ENCODE measurements at regions of chrX and their contacts with region 1.

Region 1: DNA sequence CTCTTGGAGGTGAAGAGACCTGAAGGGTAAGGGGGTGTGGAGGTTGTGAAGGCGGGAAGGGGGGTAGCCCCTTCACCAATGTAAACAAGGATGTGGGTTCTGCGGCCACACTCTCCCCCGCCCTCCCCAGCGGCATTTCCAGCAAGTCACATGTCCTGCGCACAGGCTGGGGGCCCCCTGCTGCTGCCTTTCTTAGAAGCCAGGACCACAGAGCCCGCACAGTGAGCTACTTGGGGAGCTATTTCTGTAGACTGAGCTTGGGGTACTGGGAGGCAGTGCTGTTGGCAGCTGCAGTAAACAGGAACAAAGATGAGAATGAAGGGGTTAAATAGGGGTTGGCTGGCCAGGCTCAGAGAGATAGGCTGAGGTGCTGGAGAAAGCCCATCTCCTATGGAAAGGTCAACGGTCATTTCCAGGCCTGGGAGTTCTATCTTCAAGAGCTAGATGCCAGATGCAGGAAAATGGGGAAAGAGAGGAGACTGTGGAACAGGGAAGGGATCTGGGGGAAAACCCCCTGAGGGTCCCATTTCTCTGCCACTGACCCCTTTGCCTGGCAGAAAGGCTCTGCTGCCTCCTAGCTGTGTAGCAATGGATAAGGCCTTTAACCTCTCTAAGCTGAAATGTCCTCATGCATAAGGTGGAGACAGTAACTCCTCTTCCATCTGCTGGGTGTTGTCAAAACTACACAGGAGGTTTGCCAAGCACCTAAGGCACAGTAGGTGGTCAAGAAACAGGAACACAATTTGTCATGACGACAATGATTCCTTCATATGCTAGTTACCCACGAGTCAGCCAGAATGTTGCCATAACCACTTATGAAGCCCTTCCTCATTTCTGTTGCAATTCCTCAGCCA is 18.5 kb upstream of the PIM2 start:
- DNase-seq: peak; percentile 76 to 97 (median 93)
- ATAC-seq: peak; percentile 70 to 82 (median 78)
- H3K4me3 ChIP-seq: peak overlapping the region; percentile 45 to 55
- H3K4me3 Mint-ChIP-seq: peak overlapping the region; percentile 70 to 84 (median 76)
- H3K27ac ChIP-seq: peak overlapping the region; percentile 98
- H3K27ac Mint-ChIP-seq: peak overlapping the region; percentile 92 to 99
- H3K4me1 ChIP-seq: peaks cover 31 to 84% of the 10 kb centered on the region in 2 experiments
- H3K4me1 Mint-ChIP-seq: peaks cover 87% of the 10 kb centered on the region in 3 donors
- H3K27me3 ChIP-seq: no peaks in the 10 kb centered on the region
- H3K27me3 Mint-ChIP-seq: no peaks in the 10 kb centered on the region

Region 2: GRCh38 chrX:48891402-48892288 is 45.6 kb before region 1 on chrX:
- CTCF ChIA-PET with region 1: interaction called in 1 of 2 experiments, 10 read pairs
- POLR2A ChIA-PET with region 1: no interaction called
- DNase-seq: peak; percentile 54 to 83 (median 69)
- ATAC-seq: peak; percentile 89 to 91 (median 90)
- H3K4me3 ChIP-seq: peak overlapping the region; percentile 40 to 62
- H3K4me3 Mint-ChIP-seq: peak overlapping the region; percentile 80 to 90 (median 81)
- H3K27ac ChIP-seq: no peak overlapping the region
- H3K27ac Mint-ChIP-seq: peak overlapping the region; percentile 46 to 78
- H3K4me1 ChIP-seq: peaks cover 2 to 28% of the 10 kb centered on the region in 2 experiments
- H3K4me1 Mint-ChIP-seq: peaks cover 21 to 26% (median 26%) of the 10 kb centered on the region in 3 donors
- H3K27me3 ChIP-seq: no peaks in the 10 kb centered on the region
- H3K27me3 Mint-ChIP-seq: peaks cover 0 to 9% of the 10 kb centered on the region in 2 donors

Region 3: GRCh38 chrX:48897621-48898306 is 39.5 kb before region 1 on chrX and contains the starts of genes PQBP1 and TIMM17B:
- CTCF ChIA-PET with region 1: interaction called in 1 of 2 experiments, 6 read pairs
- POLR2A ChIA-PET with region 1: interaction called in 1 of 2 experiments, 10 read pairs
- DNase-seq: peak; percentile 72 to 93 (median 86)
- ATAC-seq: peak; percentile 85 to 92 (median 90)
- H3K4me3 ChIP-seq: peak within 1 kb of the TSS; percentile 66 to 94
- H3K4me3 Mint-ChIP-seq: peak within 1 kb of the TSS; percentile 75 to 89 (median 85)
- H3K27ac ChIP-seq: peak within 1 kb of the TSS; percentile 97
- H3K27ac Mint-ChIP-seq: peak within 1 kb of the TSS; percentile 94 to 95
- H3K4me1 ChIP-seq: peaks cover 2 to 32% of the 10 kb centered on the region in 2 experiments
- H3K4me1 Mint-ChIP-seq: peaks cover 16 to 34% (median 19%) of the 10 kb centered on the region in 3 donors
- H3K27me3 ChIP-seq: no peaks in the 10 kb centered on the region
- H3K27me3 Mint-ChIP-seq: peaks cover 0 to 5% of the 10 kb centered on the region in 2 donors
- total RNA-seq, gene PQBP1: 62.5 to 79.5 (median 73.9) TPM
- total RNA-seq, gene TIMM17B: 40.5 to 52.1 (median 49.3) TPM

Region 4: DNA sequence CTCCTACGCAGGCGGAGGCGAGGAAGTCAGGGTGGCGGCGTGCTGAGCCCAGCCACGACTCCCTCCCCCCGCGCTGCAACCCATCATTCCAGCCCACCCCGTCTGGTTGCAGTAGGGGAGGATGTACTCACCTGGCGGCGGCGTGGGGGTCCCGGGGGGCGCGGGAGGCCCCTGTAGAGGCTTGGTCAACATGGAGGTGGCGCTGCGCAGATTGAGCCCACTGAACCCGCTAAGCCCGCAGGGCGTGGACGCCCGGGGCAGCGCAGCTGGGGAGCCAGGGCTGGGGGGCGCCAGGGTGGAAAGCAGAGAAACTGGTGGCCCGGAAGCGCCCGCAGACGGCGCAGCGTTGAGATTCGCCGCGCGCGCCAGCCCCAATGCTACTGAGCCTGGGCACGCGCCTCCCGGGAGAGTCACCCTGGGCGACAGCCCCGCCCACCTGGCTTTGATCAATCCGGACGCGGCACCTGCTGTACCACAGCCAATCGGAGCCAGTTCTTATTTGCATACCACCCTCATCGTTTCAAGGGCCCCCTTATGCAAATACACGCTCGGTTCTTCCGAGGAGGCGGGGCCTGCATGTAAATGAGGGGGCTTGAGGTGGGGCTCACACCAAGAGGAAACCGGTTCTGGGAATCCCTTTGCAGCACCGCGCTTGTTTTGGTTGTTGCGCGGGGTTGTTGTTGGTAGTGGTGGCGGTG is 18.5 kb before region 1 on chrX and contains the start of gene PIM2:
- CTCF ChIA-PET with region 1: interaction called, 5 to 7 read pairs
- POLR2A ChIA-PET with region 1: interaction called, 5 to 13 read pairs
- DNase-seq: peak; percentile 73 to 96 (median 92)
- ATAC-seq: peak; percentile 74 to 77 (median 76)
- H3K4me3 ChIP-seq: peak within 1 kb of the TSS; percentile 75 to 98
- H3K4me3 Mint-ChIP-seq: peak within 1 kb of the TSS; percentile 86 to 97 (median 96)
- H3K27ac ChIP-seq: peak within 1 kb of the TSS; percentile 92
- H3K27ac Mint-ChIP-seq: peak within 1 kb of the TSS; percentile 74 to 98
- H3K4me1 ChIP-seq: peaks cover 20 to 68% of the 10 kb centered on the region in 2 experiments
- H3K4me1 Mint-ChIP-seq: peaks cover 62 to 73% (median 63%) of the 10 kb centered on the region in 3 donors
- H3K27me3 ChIP-seq: no peaks in the 10 kb centered on the region
- H3K27me3 Mint-ChIP-seq: no peaks in the 10 kb centered on the region
- total RNA-seq, gene PIM2: 152 to 325 (median 160) TPM

Region 5: DNA sequence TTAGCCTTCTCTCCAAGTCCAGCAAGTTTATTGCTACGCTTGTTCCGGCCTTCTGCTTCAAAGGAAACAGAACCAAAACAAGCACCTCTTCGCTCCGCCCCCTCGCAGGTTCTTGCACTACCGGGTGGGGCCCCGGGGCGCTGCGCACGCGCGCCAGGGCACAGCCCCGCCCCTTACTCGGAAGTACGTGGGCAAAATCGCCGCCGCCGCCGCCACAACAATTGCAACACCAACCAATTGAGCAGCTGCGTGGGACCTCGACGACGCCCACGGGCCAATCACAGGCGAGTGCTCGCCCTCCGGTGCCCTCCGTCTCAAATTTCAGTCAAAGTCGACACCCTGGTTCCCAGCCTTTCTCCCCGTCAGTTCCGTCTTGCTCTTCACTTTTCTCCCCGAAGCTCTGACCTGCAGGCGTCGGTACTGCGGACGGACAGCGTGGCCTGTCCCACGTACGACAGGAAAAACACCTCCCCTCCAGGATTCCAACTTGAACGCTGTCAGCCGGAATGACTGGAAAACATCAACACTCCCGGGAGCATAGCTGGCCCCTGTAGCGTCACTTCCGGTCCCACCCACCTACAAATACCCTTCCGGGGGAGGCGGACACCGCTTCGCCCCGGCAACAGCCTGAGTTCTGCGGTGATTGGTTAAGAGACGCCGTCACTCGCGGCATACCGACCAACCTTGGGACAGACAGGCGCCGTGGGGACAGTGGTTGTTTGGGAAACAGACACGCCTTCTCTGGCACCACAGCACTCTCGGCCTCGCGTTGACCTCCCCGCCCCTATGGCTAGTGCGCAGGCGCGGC is 20.8 kb after region 1 on chrX:
- CTCF ChIA-PET with region 1: interaction called, 3 to 4 read pairs
- POLR2A ChIA-PET with region 1: interaction called, 5 to 23 read pairs
- DNase-seq: peak; percentile 77 to 97 (median 93)
- ATAC-seq: peak; percentile 81 to 86 (median 82)
- H3K4me3 ChIP-seq: peak overlapping the region; percentile 65 to 74
- H3K4me3 Mint-ChIP-seq: peak overlapping the region; percentile 82 to 98 (median 97)
- H3K27ac ChIP-seq: peak overlapping the region; percentile 99
- H3K27ac Mint-ChIP-seq: peak overlapping the region; percentile 100
- H3K4me1 ChIP-seq: peaks cover 11 to 44% of the 10 kb centered on the region in 2 experiments
- H3K4me1 Mint-ChIP-seq: peaks cover 37 to 51% (median 40%) of the 10 kb centered on the region in 3 donors
- H3K27me3 ChIP-seq: no peaks in the 10 kb centered on the region
- H3K27me3 Mint-ChIP-seq: peaks cover 0 to 11% of the 10 kb centered on the region in 2 donors

Measured in T-cell (primary cell).